PC-9 (cell line): ENCODE measurements at regions of chr17 and their contacts with region 1.

Region 1: GRCh38 chr17:50883850-50884438 is 17.8 kb upstream of the TOB1 start:
- DNase-seq: no peak
- H3K4me3 ChIP-seq: peak overlapping the region; percentile 21; the same call in 1 of the 2 replicates
- H3K27ac ChIP-seq: peak overlapping the region; percentile 85
- H3K4me1 ChIP-seq: peaks cover 46% of the 10 kb centered on the region
- H3K27me3 ChIP-seq: no peaks in the 10 kb centered on the region
- CTCF ChIP-seq: no peak

Region 2: GRCh38 chr17:49527927-49528651 is 1355.9 kb before region 1 on chr17:
- CTCF ChIA-PET with region 1: no interaction called
- POLR2A ChIA-PET with region 1: no interaction called
- intact Hi-C with region 1: no loop called
- DNase-seq: no peak
- H3K4me3 ChIP-seq: no peak overlapping the region
- H3K27ac ChIP-seq: no peak overlapping the region
- H3K4me1 ChIP-seq: no peaks in the 10 kb centered on the region
- H3K27me3 ChIP-seq: peaks cover 33% of the 10 kb centered on the region
- CTCF ChIP-seq: no peak

Region 3: DNA sequence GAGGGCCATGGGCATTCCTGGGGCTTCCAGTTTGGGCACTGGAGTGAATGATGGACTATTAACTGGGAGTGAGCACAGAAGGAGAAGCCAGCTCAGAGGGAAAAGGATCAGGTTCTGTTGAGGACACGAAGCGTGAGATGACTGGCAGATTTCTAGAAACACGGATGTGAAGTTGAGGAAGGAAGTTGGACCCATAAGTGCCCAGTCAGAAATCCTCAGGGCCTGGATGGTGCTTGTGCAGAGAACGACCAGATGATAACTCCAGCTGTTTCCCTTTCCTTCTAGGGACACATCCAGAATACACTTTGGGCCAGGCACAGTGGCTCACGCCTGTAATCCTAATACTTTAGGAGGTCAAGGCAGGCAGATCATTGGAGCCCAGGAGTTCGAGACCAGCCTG is 93.3 kb before region 1 on chr17:
- CTCF ChIA-PET with region 1: no interaction called
- POLR2A ChIA-PET with region 1: no interaction called
- intact Hi-C with region 1: no loop called
- DNase-seq: no peak
- H3K4me3 ChIP-seq: no peak overlapping the region
- H3K27ac ChIP-seq: no peak overlapping the region
- H3K4me1 ChIP-seq: no peaks in the 10 kb centered on the region
- H3K27me3 ChIP-seq: no peaks in the 10 kb centered on the region
- CTCF ChIP-seq: no peak

Region 4: DNA sequence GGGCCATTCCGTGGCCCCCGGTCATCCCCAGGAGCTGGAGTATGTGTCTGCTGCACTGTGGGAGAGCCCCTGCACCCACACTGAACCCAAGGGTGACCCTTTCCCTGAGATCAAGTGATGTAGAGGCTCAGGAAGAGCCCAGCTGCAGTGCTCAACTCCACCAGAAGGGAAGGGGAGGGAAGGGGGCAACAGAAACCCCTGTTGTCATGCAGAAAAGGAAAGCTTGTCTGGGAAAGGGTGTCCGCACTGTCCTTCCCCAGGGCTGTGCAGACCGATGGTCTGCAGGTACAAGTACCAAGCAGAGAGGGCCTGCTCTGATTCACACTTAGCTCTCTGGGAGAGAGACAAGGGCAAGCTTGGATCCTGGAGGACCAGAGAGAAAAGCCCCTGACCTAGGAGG is 27.9 kb after region 1 on chr17:
- CTCF ChIA-PET with region 1: interaction called, 17 read pairs
- POLR2A ChIA-PET with region 1: no interaction called
- intact Hi-C with region 1: loop called (anchors 1 kb)
- DNase-seq: no peak
- H3K4me3 ChIP-seq: no peak overlapping the region
- H3K27ac ChIP-seq: no peak overlapping the region
- H3K4me1 ChIP-seq: peaks cover 33% of the 10 kb centered on the region
- H3K27me3 ChIP-seq: no peaks in the 10 kb centered on the region
- CTCF ChIP-seq: no peak

Region 5: DNA sequence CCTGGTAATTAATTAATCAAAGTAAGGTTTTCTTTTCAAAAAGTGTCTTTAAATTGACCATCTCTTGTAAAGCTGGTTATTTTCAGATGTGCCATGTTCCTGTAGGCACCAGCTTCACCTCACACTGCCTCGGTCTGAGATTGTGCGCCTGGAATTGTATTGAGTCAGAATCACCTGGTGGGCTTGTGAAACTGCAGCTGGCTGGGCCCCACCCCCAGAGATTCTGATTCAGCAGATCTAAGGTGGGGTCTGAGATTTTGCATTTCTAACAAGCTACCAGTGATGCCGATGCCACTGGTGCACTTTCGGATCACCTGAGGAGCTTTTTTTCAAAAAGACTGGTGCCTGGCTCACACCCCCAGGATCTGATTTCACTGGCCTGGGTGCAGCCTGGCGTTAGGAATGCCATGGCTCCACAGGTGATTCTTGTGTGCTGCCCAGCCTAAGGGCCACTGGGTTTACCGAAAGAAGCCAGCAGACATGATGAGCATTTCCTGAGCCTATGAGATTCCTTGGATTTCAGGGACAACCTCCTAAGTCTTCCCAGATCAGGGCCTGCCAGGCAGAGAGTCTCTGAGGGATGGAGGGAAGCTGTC is 41.5 kb after region 1 on chr17:
- CTCF ChIA-PET with region 1: no interaction called
- POLR2A ChIA-PET with region 1: interaction called, 10 read pairs
- intact Hi-C with region 1: no loop called
- DNase-seq: peak in 1 of 2 experiments; percentile 35
- H3K4me3 ChIP-seq: no peak overlapping the region
- H3K27ac ChIP-seq: no peak overlapping the region
- H3K4me1 ChIP-seq: peaks cover 65% of the 10 kb centered on the region
- H3K27me3 ChIP-seq: no peaks in the 10 kb centered on the region
- CTCF ChIP-seq: no peak

Region 6: GRCh38 chr17:50935201-50935995 is 51.5 kb after region 1 on chr17:
- CTCF ChIA-PET with region 1: no interaction called
- POLR2A ChIA-PET with region 1: no interaction called
- intact Hi-C with region 1: no loop called
- DNase-seq: peak; percentile 82 to 94
- H3K4me3 ChIP-seq: no peak overlapping the region
- H3K27ac ChIP-seq: peak overlapping the region; percentile 13
- H3K4me1 ChIP-seq: peaks cover 55% of the 10 kb centered on the region
- H3K27me3 ChIP-seq: no peaks in the 10 kb centered on the region
- CTCF ChIP-seq: no peak

Region 7: DNA sequence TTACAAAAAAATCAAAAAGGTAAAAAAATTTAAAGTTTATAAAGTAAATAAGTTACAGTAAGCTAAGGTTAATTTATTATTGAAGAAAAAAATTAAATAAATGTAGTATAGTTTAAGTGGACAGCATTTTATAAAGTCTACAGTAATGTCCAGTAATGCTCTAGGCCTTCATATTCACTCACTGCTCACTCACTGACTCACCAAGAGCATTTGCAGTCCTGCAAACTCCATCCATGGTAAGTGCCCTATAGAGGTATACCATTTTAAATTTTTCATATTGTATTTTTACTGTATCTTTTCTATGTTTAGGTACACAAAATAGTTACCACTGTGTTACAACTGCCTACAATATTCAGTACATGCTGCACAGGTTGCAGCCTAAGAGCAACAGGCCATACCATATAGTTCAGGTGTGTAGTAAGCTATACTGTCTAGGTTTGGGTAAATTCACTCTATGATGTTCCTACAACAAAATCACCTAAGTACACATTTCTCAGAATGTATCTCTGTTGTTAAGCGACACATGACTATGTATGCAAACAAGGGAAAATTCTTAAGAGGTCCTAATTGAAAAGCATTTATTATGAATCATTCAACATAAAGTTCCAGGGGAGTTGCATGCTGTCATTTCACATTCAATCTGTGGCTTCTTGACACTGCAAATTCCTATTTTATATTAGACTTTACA is 144.4 kb after region 1 on chr17:
- CTCF ChIA-PET with region 1: no interaction called
- POLR2A ChIA-PET with region 1: interaction called, 11 read pairs
- intact Hi-C with region 1: no loop called
- DNase-seq: no peak
- H3K4me3 ChIP-seq: no peak overlapping the region
- H3K27ac ChIP-seq: no peak overlapping the region
- H3K4me1 ChIP-seq: no peaks in the 10 kb centered on the region
- H3K27me3 ChIP-seq: no peaks in the 10 kb centered on the region
- CTCF ChIP-seq: no peak

Region 8: GRCh38 chr17:51572115-51572514 is 688.2 kb after region 1 on chr17:
- CTCF ChIA-PET with region 1: no interaction called
- POLR2A ChIA-PET with region 1: no interaction called
- intact Hi-C with region 1: no loop called
- DNase-seq: no peak
- H3K4me3 ChIP-seq: no peak overlapping the region
- H3K27ac ChIP-seq: no peak overlapping the region
- H3K4me1 ChIP-seq: no peaks in the 10 kb centered on the region
- H3K27me3 ChIP-seq: peaks cover 33% of the 10 kb centered on the region
- CTCF ChIP-seq: no peak